K562 (cell line): ENCODE measurements at regions of chr11 and their contacts with region 1.

Region 1: GRCh38 chr11:33329705-33330329 is 72.6 kb downstream of the HIPK3 start:
- DNase-seq: peak; percentile 26 to 74 (median 40)
- ATAC-seq: peak; percentile 96
- H3K4me3 ChIP-seq: no peak overlapping the region
- H3K27ac ChIP-seq: no peak overlapping the region
- H3K4me1 ChIP-seq: no peaks in the 10 kb centered on the region
- H3K27me3 ChIP-seq: no peaks in the 10 kb centered on the region
- CTCF ChIP-seq: peak; percentile 68 to 85 (median 72)
- EP300 ChIP-seq: no peak
- POLR2A ChIP-seq: no peak
- RAD21 ChIP-seq: peak; percentile 75 to 88

Region 2: GRCh38 chr11:32817181-32817851 is 512.5 kb before region 1 on chr11:
- CTCF ChIA-PET with region 1: no interaction called
- POLR2A ChIA-PET with region 1: no interaction called
- in situ Hi-C with region 1: no loop called
- intact Hi-C with region 1: loop called (anchors 10 kb)
- DNase-seq: no peak
- ATAC-seq: no peak
- H3K4me3 ChIP-seq: no peak overlapping the region
- H3K27ac ChIP-seq: no peak overlapping the region
- H3K4me1 ChIP-seq: no peaks in the 10 kb centered on the region
- H3K27me3 ChIP-seq: peaks cover 0 to 11% of the 10 kb centered on the region in 2 experiments; a peak in 2 of 5 replicates
- CTCF ChIP-seq: no peak
- EP300 ChIP-seq: no peak
- POLR2A ChIP-seq: no peak
- RAD21 ChIP-seq: no peak

Region 3: GRCh38 chr11:33089776-33090175 is 240.0 kb before region 1 on chr11:
- CTCF ChIA-PET with region 1: no interaction called
- POLR2A ChIA-PET with region 1: no interaction called
- in situ Hi-C with region 1: no loop called
- intact Hi-C with region 1: loop called (anchors 5 kb)
- DNase-seq: no peak
- ATAC-seq: no peak
- H3K4me3 ChIP-seq: no peak overlapping the region
- H3K27ac ChIP-seq: no peak overlapping the region
- H3K4me1 ChIP-seq: no peaks in the 10 kb centered on the region
- H3K27me3 ChIP-seq: no peaks in the 10 kb centered on the region
- CTCF ChIP-seq: no peak
- EP300 ChIP-seq: no peak
- POLR2A ChIP-seq: no peak
- RAD21 ChIP-seq: no peak

Region 4: DNA sequence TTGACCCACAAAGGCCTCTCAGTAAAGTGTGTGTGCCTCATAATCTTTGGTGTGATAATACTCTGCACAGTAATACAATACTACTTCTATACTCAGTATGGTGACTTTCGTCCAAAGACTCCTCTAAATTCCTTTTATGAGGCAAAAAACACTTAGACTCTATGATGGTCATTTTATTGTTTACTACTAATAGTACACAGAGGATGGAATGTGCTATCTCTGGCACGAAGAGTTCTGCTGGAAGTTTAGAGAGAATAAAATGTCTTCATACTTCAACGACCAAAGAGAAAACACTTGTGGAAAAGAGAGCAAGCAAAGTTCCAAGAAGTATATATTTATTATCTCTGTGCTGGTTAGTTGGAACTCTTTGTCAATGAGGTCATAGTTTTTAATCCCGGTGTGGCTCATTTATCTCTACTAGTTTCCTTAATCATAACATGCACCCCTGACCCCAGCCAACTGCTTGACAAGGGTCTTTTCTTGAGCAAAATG is 161.1 kb before region 1 on chr11:
- CTCF ChIA-PET with region 1: interaction called, 27 read pairs
- POLR2A ChIA-PET with region 1: interaction called, 3 read pairs
- in situ Hi-C with region 1: loop called (anchors 5 kb)
- intact Hi-C with region 1: loop called (anchors 1 kb)
- DNase-seq: no peak
- ATAC-seq: peak; percentile 56; the same call in 2 of the 3 replicates
- H3K4me3 ChIP-seq: no peak overlapping the region
- H3K27ac ChIP-seq: peak overlapping the region; percentile 21; the same call in 1 of the 3 replicates
- H3K4me1 ChIP-seq: no peaks in the 10 kb centered on the region; a peak in 1 of 5 replicates
- H3K27me3 ChIP-seq: no peaks in the 10 kb centered on the region
- CTCF ChIP-seq: no peak
- EP300 ChIP-seq: no peak
- POLR2A ChIP-seq: no peak
- RAD21 ChIP-seq: no peak